PC-9 (cell line): ENCODE measurements at regions of chr4 and their contacts with region 1.

Region 1: DNA sequence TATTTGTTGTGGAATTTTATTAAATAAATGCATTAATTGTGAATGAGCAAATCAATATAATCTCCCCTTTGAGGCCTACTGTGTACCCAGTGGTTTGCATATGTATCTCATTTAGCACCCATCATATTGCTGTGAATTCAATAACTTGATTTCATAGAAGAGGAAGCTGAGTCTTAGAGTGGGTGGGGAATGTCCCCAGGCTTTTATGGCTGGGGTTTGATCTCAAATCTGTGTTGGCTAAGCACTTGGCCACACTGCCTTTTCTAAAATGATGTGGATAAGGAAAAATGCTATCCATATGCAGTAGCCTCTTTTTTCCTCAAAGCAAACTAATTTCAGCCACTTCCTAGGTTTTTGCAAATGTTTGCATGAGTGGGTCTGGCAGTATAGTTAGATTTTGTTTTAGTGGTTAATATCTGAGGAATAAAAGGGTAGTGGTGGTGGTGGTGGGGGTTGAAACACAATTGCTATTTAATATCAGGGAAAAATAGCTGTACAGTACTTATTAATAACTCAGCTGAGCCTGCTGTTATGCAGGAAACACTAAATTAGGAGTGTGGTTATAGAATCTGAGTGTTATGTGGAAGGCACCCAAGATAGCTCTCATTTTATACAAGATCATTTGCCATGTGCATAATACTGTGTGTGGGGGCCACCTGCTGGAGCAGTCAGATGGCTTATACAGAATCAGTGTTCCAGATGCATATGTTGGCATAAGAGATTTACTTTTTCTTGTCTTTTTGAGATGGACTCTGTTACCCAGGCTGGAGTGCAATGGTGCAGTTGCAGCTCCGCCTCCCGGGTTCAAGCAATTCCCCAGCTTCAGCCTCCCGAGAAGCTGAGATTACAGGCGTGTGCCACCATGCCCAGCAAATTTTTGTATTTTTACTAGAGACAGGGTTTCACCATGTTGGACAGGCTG is 108.0 kb downstream of the TMEM131L start:
- DNase-seq: peak; percentile 46 to 57
- H3K4me3 ChIP-seq: no peak overlapping the region
- H3K27ac ChIP-seq: no peak overlapping the region
- H3K4me1 ChIP-seq: peaks cover 5% of the 10 kb centered on the region; the same call in 1 of the 2 replicates
- H3K27me3 ChIP-seq: no peaks in the 10 kb centered on the region
- CTCF ChIP-seq: peak; percentile 67

Region 2: GRCh38 chr4:153083447-153083947 is 490.6 kb before region 1 on chr4:
- CTCF ChIA-PET with region 1: no interaction called
- POLR2A ChIA-PET with region 1: no interaction called
- intact Hi-C with region 1: loop called (anchors 1 kb)
- DNase-seq: peak; percentile 55 to 66
- H3K4me3 ChIP-seq: no peak overlapping the region
- H3K27ac ChIP-seq: peak overlapping the region; percentile 49; the same call in 1 of the 2 replicates
- H3K4me1 ChIP-seq: peaks cover 18% of the 10 kb centered on the region
- H3K27me3 ChIP-seq: no peaks in the 10 kb centered on the region
- CTCF ChIP-seq: peak; percentile 70

Region 3: GRCh38 chr4:153232768-153233167 is 341.4 kb before region 1 on chr4:
- CTCF ChIA-PET with region 1: no interaction called
- POLR2A ChIA-PET with region 1: no interaction called
- intact Hi-C with region 1: loop called (anchors 10 kb)
- DNase-seq: peak; percentile 57 to 60
- H3K4me3 ChIP-seq: no peak overlapping the region
- H3K27ac ChIP-seq: peak overlapping the region; percentile 68
- H3K4me1 ChIP-seq: peaks cover 62% of the 10 kb centered on the region
- H3K27me3 ChIP-seq: no peaks in the 10 kb centered on the region
- CTCF ChIP-seq: no peak; the same call in 1 of the 2 replicates

Region 4: GRCh38 chr4:153432968-153433753 is 141.0 kb before region 1 on chr4:
- CTCF ChIA-PET with region 1: interaction called, 15 read pairs
- POLR2A ChIA-PET with region 1: no interaction called
- intact Hi-C with region 1: loop called (anchors 1 kb)
- DNase-seq: peak; percentile 72 to 87
- H3K4me3 ChIP-seq: no peak overlapping the region
- H3K27ac ChIP-seq: peak overlapping the region; percentile 61; the same call in 1 of the 2 replicates
- H3K4me1 ChIP-seq: 0 out of 2 replicates have a peak, but pooled peaks cover 8% of the 10 kb centered on the region
- H3K27me3 ChIP-seq: no peaks in the 10 kb centered on the region
- CTCF ChIP-seq: peak; percentile 70

Region 5: GRCh38 chr4:153750197-153750817 is 176.2 kb after region 1 on chr4:
- CTCF ChIA-PET with region 1: no interaction called
- POLR2A ChIA-PET with region 1: no interaction called
- intact Hi-C with region 1: loop called (anchors 5 kb)
- DNase-seq: peak; percentile 49 to 53
- H3K4me3 ChIP-seq: no peak overlapping the region
- H3K27ac ChIP-seq: no peak overlapping the region
- H3K4me1 ChIP-seq: no peaks in the 10 kb centered on the region
- H3K27me3 ChIP-seq: no peaks in the 10 kb centered on the region
- CTCF ChIP-seq: peak; percentile 78